Activated CD4-positive, alpha-beta T cell treated with anti-CD3 and anti-CD28 coated beads, Interleukin-2, amount 10 ng/mL, durations not matched to agents 24 days and 14 days (primary cell): ENCODE measurements at regions of chr3 and their contacts with region 1.

Region 1: GRCh38 chr3:101518421-101518871 is 5.4 kb upstream of the SENP7 start:
- DNase-seq: peak; percentile 84
- H3K4me3 Mint-ChIP-seq: peak overlapping the region; percentile 46
- H3K27ac Mint-ChIP-seq: peak overlapping the region; percentile 92
- H3K4me1 Mint-ChIP-seq: peaks cover 41% of the 10 kb centered on the region
- H3K27me3 Mint-ChIP-seq: no peaks in the 10 kb centered on the region

Region 2: GRCh38 chr3:100665230-100665629 is 853.2 kb before region 1 on chr3:
- intact Hi-C with region 1: loop called (anchors 2 kb)
- DNase-seq: peak; percentile 86
- H3K4me3 Mint-ChIP-seq: peak overlapping the region; percentile 59
- H3K27ac Mint-ChIP-seq: peak overlapping the region; percentile 81
- H3K4me1 Mint-ChIP-seq: peaks cover 27% of the 10 kb centered on the region
- H3K27me3 Mint-ChIP-seq: no peaks in the 10 kb centered on the region

Region 3: DNA sequence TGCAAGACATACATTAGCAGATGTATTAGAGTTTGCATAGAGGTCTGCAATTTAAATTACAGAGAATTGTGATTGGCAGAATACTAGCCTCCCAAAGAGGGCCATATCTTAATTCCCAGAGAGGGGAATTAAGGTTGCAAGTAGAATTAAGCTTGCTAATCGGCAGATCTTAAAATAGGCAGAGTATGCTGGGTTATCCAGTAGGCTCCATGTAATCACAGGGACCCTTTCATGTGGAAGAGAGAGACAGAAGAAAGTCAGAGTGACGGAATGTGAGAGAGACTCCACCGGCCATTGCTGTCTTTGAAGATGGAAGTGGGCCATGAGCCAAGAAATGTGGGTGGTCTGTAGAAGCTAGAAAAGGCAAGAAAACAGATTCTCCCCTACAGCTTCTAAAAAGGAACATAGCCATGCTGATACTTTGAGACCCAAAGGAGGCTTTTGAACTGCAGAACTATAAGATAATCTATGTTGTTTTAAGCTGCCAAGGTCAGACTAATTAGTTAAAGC is 236.9 kb before region 1 on chr3:
- intact Hi-C with region 1: no loop called
- DNase-seq: no peak
- H3K4me3 Mint-ChIP-seq: no peak overlapping the region
- H3K27ac Mint-ChIP-seq: no peak overlapping the region
- H3K4me1 Mint-ChIP-seq: no peaks in the 10 kb centered on the region
- H3K27me3 Mint-ChIP-seq: no peaks in the 10 kb centered on the region

Region 4: DNA sequence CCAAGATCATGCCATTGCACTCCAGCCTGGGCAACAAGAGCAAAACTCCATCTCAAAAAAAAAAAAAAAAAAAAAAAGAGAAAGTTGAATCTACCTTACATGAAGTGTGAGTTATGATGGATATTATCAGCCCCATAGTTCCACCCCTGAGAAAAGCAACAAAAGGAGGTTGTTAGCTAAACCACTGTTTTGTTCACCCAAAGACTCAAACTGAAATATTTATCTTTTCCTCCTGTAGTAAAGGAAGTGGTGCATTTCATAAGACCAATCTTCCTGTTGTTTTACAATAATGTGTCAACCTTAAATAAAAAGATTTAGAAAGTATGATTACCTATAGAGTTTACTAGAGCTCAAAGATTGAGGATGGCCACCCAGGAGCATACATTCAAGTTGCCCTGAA is 24.5 kb after region 1 on chr3:
- intact Hi-C with region 1: loop called (anchors 1 kb)
- DNase-seq: no peak
- H3K4me3 Mint-ChIP-seq: peak overlapping the region; percentile 5
- H3K27ac Mint-ChIP-seq: peak overlapping the region; percentile 4
- H3K4me1 Mint-ChIP-seq: peaks cover 19% of the 10 kb centered on the region
- H3K27me3 Mint-ChIP-seq: peaks cover 3% of the 10 kb centered on the region

Region 5: GRCh38 chr3:101567528-101568317 is 49.3 kb after region 1 on chr3:
- intact Hi-C with region 1: loop called (anchors 1 kb)
- DNase-seq: no peak
- H3K4me3 Mint-ChIP-seq: peak overlapping the region; percentile 69
- H3K27ac Mint-ChIP-seq: peak overlapping the region; percentile 96
- H3K4me1 Mint-ChIP-seq: peaks cover 56% of the 10 kb centered on the region
- H3K27me3 Mint-ChIP-seq: no peaks in the 10 kb centered on the region

Region 6: GRCh38 chr3:101676765-101677435 is 158.5 kb after region 1 on chr3 and contains the start of gene ZBTB11:
- intact Hi-C with region 1: loop called (anchors 2 kb)
- DNase-seq: peak; percentile 100
- H3K4me3 Mint-ChIP-seq: peak within 1 kb of the TSS; percentile 89
- H3K27ac Mint-ChIP-seq: peak within 1 kb of the TSS; percentile 97
- H3K4me1 Mint-ChIP-seq: peaks cover 36% of the 10 kb centered on the region
- H3K27me3 Mint-ChIP-seq: no peaks in the 10 kb centered on the region
- total RNA-seq, gene ZBTB11: 29.0 and 30.2 TPM in 2 replicates